AG04450 (cell line): ENCODE measurements at regions of chr3 and their contacts with region 1.

Region 1: DNA sequence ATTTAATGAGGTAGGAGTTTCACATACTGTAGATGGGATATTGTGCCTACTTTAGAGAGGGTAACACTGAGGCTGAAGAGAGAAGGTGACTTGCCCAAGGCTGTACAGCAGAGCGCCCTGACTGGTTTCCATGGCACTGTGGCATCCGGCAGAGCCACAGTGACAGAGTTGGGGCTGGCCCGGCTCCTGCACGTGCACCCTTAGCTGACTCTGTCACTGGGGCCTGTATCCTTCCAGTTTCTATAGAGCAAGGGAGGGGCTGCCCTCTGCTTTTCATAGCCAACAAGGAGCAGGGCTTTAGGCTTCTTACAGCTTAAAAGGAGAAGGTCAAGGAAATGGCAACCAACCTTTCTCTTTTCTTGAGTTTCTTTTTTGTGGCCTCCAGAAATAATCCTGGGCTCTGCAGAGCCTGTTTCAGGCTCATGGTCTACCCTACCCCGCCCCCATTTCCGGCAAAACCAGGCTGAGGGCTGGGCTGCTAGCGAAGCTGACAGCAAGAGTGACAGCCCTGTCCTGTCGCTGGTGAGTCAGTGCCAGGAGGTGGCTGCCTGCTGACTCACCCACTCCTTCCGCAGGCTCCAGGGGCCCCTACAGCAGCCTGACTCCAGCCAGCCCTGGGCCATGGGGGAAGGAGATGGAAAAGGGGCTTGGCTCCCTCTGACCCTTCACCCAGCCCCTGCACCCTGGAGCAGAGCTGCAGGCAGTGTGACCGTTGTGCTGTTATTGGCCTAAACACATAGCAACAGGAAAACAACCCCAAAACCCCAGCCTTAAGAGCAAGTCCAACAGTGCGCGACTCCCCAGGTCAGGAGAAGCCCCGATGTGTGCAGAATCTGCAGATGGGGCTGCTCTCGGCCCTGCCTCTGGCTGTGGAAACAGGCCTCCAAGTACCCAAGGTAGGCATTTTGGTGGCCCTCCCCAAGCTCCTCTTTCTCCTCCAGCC is 29.8 kb downstream of the SLC6A6 start:
- DNase-seq: no peak
- H3K4me3 ChIP-seq: no peak overlapping the region
- H3K27ac ChIP-seq: peak overlapping the region; percentile 52
- H3K27me3 ChIP-seq: no peaks in the 10 kb centered on the region
- CTCF ChIP-seq: no peak

Region 2: GRCh38 chr3:14452679-14453367 is 20.7 kb after region 1 on chr3:
- CTCF ChIA-PET with region 1: interaction called, 4 read pairs
- POLR2A ChIA-PET with region 1: interaction called, 12 read pairs
- DNase-seq: peak; percentile 96
- H3K4me3 ChIP-seq: peak overlapping the region; percentile 32
- H3K27ac ChIP-seq: peak overlapping the region; percentile 100
- H3K27me3 ChIP-seq: no peaks in the 10 kb centered on the region
- CTCF ChIP-seq: peak; percentile 30